ENCODE measurements at regions of chr7 and their contacts with region 1.

Region 1: DNA sequence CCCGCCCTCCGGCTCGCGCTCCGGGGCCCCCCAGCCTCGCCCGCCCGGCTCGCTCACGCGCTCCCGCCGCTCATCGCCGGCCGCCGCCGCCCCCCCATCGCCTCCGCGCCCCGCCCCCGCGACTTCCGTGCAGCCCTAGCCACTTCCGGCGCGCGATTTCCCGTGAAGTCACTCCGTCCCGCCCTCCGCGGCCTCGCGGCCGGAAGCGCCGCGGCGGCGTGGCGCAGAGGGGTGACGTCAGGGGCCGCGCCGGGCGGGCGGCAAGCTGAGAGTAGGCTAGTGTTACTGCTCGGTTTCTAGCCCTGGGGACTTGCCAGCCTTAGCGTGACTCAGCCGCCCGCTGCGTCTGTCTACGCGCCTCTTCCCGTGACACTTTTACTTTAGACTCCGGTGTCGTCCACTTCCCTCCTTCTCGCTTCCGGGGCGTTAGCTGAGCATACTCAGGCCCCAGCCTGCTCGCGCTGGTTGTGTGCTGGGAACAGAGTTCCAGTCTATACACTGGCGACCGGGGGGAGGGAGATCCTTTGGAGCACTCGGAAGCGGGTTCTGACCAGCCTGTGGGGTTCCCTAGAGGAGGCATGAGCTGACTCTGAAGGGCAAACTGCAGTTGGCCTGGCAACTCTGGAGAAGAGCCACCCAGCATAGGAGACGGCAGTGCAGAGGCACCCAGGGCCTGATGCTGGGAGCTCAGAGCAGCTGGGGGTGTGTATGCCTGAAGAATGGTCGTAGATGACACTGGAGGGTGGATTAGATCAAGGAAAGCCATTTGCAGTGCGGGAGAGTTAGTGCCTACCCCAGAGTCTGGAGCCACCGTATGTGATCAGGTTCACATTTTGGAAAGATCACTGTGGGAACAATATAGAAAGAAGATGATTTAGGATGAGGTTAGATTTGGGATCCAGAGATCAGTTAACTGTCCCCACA is at the start of gene PURB:
- DNase-seq: peak; percentile 98
- ATAC-seq: peak; percentile 85
- H3K4me3 Mint-ChIP-seq: peak within 1 kb of the TSS; percentile 95
- H3K27ac Mint-ChIP-seq: peak within 1 kb of the TSS; percentile 99
- H3K4me1 Mint-ChIP-seq: peaks cover 59% of the 10 kb centered on the region
- H3K27me3 Mint-ChIP-seq: no peaks in the 10 kb centered on the region
- CTCF ChIP-seq: no peak
- total RNA-seq, gene PURB: 21.3 and 23.8 TPM in 2 replicates

Region 2: DNA sequence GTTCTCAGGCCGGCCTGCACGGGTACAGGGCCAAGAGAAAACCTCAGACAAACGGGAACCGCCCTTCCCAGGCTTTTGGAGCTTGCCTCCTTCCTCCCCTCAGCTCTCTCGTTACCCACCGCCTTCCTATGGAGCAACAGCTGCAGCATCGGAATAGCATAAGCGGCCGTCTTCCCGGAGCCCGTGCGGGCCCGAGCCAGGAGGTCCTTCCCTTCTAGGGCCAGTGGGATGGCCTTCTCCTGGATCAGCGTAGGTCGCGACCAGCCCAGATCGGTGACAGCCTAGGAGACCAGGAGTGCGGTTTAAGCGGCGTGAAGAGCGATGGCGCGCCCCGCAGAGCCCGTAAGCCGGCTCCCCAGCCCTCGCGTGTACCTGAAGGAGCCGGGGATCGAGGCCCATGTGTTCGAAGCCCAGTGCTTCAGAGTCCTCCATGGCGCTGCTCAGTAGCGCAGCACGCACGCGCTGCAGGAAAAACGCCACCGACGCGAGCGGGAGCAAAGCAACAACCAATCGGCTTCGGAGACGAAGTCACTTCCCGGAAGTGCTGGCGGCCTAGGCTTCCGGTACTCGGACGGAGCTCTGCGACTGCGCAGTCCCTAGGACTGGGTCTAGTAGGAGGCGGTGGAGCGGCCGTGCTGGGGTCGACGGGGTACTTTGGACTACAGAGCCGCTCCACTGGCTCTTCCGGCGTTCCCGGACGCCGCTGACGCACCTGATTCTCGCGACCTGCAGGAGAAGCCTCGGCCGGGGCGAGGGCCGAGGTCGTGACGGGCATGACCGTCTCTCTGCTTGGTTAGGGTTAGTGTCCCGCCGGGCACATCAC is 312.0 kb before region 1 on chr7 and contains the start of gene DDX56:
- CTCF ChIA-PET with region 1: no interaction called
- POLR2A ChIA-PET with region 1: interaction called, 10 read pairs
- intact Hi-C with region 1: no loop called
- DNase-seq: peak; percentile 82
- ATAC-seq: peak; percentile 97
- H3K4me3 Mint-ChIP-seq: peak within 1 kb of the TSS; percentile 94
- H3K27ac Mint-ChIP-seq: peak within 1 kb of the TSS; percentile 94
- H3K4me1 Mint-ChIP-seq: peaks cover 35% of the 10 kb centered on the region
- H3K27me3 Mint-ChIP-seq: no peaks in the 10 kb centered on the region
- CTCF ChIP-seq: no peak
- total RNA-seq, gene DDX56: 92.6 and 99.7 TPM in 2 replicates

Region 3: GRCh38 chr7:44606450-44607254 is 279.0 kb before region 1 on chr7 and contains the start of gene OGDH:
- CTCF ChIA-PET with region 1: no interaction called
- POLR2A ChIA-PET with region 1: interaction called, 9 read pairs
- intact Hi-C with region 1: loop called (anchors 1 kb)
- DNase-seq: peak; percentile 100
- ATAC-seq: peak; percentile 94
- H3K4me3 Mint-ChIP-seq: peak within 1 kb of the TSS; percentile 98
- H3K27ac Mint-ChIP-seq: peak within 1 kb of the TSS; percentile 98
- H3K4me1 Mint-ChIP-seq: peaks cover 45% of the 10 kb centered on the region
- H3K27me3 Mint-ChIP-seq: no peaks in the 10 kb centered on the region
- CTCF ChIP-seq: no peak
- total RNA-seq, gene OGDH: 79.5 and 81.7 TPM in 2 replicates

Region 4: GRCh38 chr7:44748045-44748947 is 137.4 kb before region 1 on chr7 and contains the start of gene ZMIZ2:
- CTCF ChIA-PET with region 1: no interaction called
- POLR2A ChIA-PET with region 1: interaction called, 8 read pairs
- intact Hi-C with region 1: loop called (anchors 1 kb)
- DNase-seq: peak; percentile 97
- ATAC-seq: peak; percentile 78
- H3K4me3 Mint-ChIP-seq: peak within 1 kb of the TSS; percentile 91
- H3K27ac Mint-ChIP-seq: peak within 1 kb of the TSS; percentile 95
- H3K4me1 Mint-ChIP-seq: peaks cover 48% of the 10 kb centered on the region
- H3K27me3 Mint-ChIP-seq: no peaks in the 10 kb centered on the region
- CTCF ChIP-seq: no peak
- total RNA-seq, gene ZMIZ2: 378 and 440 TPM in 2 replicates

Region 5: DNA sequence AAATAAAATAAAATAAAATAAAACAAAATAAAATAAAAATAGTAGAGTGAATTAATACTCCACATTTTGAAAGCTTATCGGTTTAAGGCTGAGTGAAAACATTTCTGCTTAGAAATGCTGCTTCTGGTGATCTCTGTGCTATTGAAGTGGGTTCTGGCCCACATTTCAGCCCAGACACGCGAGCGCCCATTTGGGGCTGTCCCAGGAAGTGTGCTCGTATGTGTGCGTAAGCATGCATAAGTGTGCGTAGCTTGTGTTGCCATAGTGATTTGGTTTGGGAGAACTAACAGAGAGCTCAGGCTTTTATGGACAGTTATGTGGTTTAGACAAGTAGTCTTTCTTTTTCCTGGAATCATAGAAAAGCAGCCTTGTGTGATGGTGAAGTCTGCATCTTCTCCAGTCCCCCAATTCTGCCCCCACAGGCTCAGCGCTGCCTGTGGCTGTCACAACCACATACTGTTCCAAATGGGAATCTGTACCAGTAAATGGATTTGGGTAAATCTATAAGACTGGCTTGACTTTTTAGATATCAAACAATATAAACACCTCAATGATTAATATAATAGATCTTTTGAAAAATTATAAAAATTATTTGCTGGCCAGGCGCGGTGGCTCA is 29.4 kb after region 1 on chr7:
- CTCF ChIA-PET with region 1: interaction called, 7 read pairs
- POLR2A ChIA-PET with region 1: interaction called, 41 read pairs
- intact Hi-C with region 1: loop called (anchors 1 kb)
- DNase-seq: peak; percentile 53
- ATAC-seq: peak; percentile 95
- H3K4me3 Mint-ChIP-seq: peak overlapping the region; percentile 41
- H3K27ac Mint-ChIP-seq: peak overlapping the region; percentile 78
- H3K4me1 Mint-ChIP-seq: peaks cover 11% of the 10 kb centered on the region
- H3K27me3 Mint-ChIP-seq: no peaks in the 10 kb centered on the region
- CTCF ChIP-seq: no peak

Region 6: DNA sequence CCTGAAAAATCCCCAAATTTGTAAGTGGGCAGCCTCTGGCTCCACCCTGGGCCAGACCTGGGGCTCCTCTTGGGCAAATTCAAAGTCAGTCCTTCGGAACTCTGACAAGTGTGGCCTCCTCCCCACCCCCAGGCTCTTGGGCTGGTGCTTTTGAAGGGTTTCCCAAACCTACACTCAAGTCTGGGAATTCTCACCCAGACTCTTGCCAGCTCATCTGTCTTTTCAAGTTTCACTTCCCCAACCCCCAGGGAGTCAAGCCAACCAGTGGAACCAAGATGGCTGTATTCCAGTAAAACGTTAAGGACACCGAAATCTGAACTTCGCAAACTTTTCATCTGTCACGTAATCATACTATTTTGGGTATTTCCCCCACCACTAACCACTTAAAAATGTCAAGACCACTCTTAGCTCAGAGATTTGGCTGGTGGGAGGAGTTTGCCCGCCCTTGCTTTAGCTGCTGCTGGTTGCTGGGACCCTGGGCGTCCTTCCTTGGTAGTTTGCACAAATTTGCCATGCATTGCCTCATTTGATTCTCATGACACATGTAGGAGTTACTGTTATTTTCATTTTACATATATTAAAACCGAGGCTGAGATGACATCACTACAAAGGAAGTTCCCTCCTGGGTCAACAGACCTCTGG is 94.9 kb after region 1 on chr7:
- CTCF ChIA-PET with region 1: no interaction called
- POLR2A ChIA-PET with region 1: interaction called, 19 read pairs
- intact Hi-C with region 1: loop called (anchors 1 kb)
- DNase-seq: peak; percentile 56
- ATAC-seq: peak; percentile 63
- H3K4me3 Mint-ChIP-seq: peak overlapping the region; percentile 74
- H3K27ac Mint-ChIP-seq: peak overlapping the region; percentile 92
- H3K4me1 Mint-ChIP-seq: peaks cover 86% of the 10 kb centered on the region
- H3K27me3 Mint-ChIP-seq: no peaks in the 10 kb centered on the region
- CTCF ChIP-seq: no peak

Region 7: DNA sequence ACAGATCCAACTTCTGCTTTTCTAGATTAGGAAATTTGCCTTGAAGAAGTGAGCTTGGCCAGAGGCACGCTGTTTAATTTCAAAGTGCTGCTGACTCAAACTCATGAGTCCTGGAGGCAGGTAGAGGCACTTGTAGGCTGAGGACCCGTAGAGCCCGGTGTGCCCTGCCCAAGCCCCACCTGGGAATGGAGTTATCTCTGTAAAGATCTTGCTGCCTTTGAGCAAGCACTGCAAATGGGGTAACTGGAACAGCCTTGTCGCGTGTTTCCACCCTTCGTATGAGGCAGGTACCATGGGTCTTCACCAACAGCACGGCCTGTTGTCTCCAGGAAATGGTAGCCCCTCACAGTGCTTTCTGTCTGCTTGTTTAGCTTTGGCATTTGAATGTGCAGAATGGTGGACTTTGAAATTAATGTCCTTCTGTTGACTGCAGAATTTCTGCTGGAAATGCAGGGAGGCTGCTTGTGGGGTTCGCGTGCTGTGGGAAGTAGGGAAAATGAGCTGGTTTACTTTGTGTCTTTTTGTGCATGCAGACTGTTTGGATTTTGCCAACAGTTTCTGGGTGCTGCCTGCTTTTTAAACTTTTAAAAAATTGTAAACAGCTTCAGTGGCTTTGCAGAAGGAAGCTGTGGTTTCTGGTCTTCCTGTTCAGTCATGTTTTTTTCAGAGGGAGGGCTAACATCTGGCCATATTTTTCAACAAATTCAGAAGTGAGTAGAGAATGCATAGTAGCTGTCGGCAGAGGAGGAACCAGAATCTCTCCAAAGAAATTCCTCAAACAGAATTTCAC is 141.5 kb after region 1 on chr7:
- CTCF ChIA-PET with region 1: no interaction called
- POLR2A ChIA-PET with region 1: interaction called, 12 read pairs
- intact Hi-C with region 1: loop called (anchors 1 kb)
- DNase-seq: peak; percentile 41
- ATAC-seq: peak; percentile 75
- H3K4me3 Mint-ChIP-seq: peak overlapping the region; percentile 83
- H3K27ac Mint-ChIP-seq: peak overlapping the region; percentile 84
- H3K4me1 Mint-ChIP-seq: peaks cover 77% of the 10 kb centered on the region
- H3K27me3 Mint-ChIP-seq: no peaks in the 10 kb centered on the region
- CTCF ChIP-seq: no peak